Posterior cingulate gyrus (tissue), 11 donors: ENCODE measurements at regions of chr4 and their contacts with region 1.

Region 1: GRCh38 chr4:83012687-83013419 is 2.2 kb upstream of the LIN54 start:
- DNase-seq: peak; percentile 96 to 100 (median 97)

Region 2: GRCh38 chr4:82373816-82374625 is 638.8 kb before region 1 on chr4 and contains the start of gene HNRNPD:
- intact Hi-C with region 1: loop called (anchors 5 kb)
- DNase-seq: peak; percentile 90 to 99 (median 96)

Region 3: GRCh38 chr4:82428969-82429727 is 583.7 kb before region 1 on chr4:
- intact Hi-C with region 1: loop called (anchors 10 kb)
- DNase-seq: peak; percentile 84 to 99 (median 90)

Region 4: GRCh38 chr4:82462415-82462831 is 550.4 kb before region 1 on chr4:
- intact Hi-C with region 1: loop called (anchors 10 kb)
- DNase-seq: peak; percentile 72 to 97 (median 84)

Region 5: GRCh38 chr4:82900331-82901128 is 112.3 kb before region 1 on chr4 and contains the start of gene THAP9:
- intact Hi-C with region 1: loop called (anchors 2 kb)
- DNase-seq: peak; percentile 97 to 100 (median 99)

Region 6: GRCh38 chr4:82918091-82918490 is 94.8 kb before region 1 on chr4:
- intact Hi-C with region 1: loop called (anchors 5 kb)
- DNase-seq: no peak

Region 7: GRCh38 chr4:83034630-83035494 is 22.0 kb after region 1 on chr4 and contains the start of gene COPS4:
- intact Hi-C with region 1: loop called (anchors 1 kb)
- DNase-seq: peak; percentile 93 to 100 (median 96)